ENCODE measurements at regions of chr16 and their contacts with region 1.

Region 1: DNA sequence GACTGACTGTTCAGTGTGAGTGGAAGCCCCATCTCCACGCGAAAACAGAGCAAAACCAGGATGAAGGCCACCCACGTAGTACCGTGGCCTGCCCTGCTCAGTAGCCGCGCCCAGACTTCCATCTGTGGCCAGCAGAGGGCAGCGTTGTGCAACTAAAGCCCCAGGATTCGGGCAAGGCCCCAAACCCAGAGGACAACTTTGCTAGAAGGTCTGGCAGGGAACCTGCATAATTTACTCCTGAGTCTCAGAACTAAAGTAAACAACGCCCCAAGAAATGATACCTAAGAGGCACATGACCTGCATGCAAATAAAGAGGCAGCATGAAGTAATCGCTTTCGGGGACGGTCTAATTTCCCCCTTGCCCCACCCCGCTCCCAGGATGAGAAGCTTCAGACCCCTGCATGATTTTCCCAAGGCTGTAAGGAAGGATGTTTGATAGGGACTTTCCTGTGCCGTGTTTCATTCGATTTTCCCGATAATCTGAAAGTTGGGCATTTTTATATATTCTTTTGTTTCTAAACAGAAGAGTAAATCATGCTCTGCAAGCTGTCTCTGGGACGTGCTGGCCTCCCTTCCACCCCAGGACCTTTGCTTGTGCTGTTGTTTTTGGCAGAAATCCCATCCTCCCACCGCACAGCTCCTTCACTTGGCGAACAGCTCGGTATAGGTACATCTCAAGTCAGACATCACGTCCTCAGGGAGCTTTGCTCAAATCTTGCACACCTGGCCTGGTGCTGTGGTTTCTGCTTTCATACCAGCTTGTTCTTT is 18.6 kb downstream of the HSBP1 start:
- DNase-seq: peak; percentile 85
- H3K4me3 ChIP-seq: no peak overlapping the region
- H3K27ac ChIP-seq: no peak overlapping the region
- H3K4me1 ChIP-seq: peaks cover 5% of the 10 kb centered on the region
- H3K27me3 ChIP-seq: no peaks in the 10 kb centered on the region
- CTCF ChIP-seq: peak; percentile 89 to 90

Region 2: DNA sequence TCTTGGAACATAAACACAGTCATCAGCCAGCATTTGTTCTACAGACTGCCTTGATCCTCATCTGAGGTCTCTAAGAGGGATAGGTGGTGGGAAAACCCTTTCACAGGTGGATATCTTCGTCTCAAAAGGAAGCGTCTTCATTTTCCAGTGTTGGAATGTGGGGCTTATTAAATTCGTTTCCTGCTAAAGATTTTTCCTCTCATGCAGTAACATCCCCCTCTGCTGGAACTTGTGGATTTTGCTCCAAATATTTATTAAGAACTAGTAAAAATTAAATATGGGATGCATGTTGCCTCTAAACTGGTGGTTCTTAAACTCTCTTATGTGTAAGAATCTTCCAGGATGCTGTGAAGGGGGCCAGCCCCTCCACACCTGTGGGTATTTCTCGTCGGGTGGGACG is 52.5 kb after region 1 on chr16:
- CTCF ChIA-PET with region 1: no interaction called
- dilution Hi-C with region 1: no loop called
- in situ Hi-C with region 1: loop called in 1 of 2 experiments (anchors 10 kb)
- intact Hi-C with region 1: loop called (anchors 1 kb)
- DNase-seq: peak; percentile 35
- H3K4me3 ChIP-seq: no peak overlapping the region
- H3K27ac ChIP-seq: no peak overlapping the region
- H3K4me1 ChIP-seq: no peaks in the 10 kb centered on the region
- H3K27me3 ChIP-seq: peaks cover 3% of the 10 kb centered on the region
- CTCF ChIP-seq: peak; percentile 25 to 55

Region 3: GRCh38 chr16:83887081-83887480 is 60.8 kb after region 1 on chr16:
- CTCF ChIA-PET with region 1: no interaction called
- dilution Hi-C with region 1: no loop called
- in situ Hi-C with region 1: loop called in 1 of 2 experiments (anchors 10 kb)
- intact Hi-C with region 1: no loop called
- DNase-seq: peak; percentile 2
- H3K4me3 ChIP-seq: no peak overlapping the region
- H3K27ac ChIP-seq: no peak overlapping the region
- H3K4me1 ChIP-seq: no peaks in the 10 kb centered on the region
- H3K27me3 ChIP-seq: no peaks in the 10 kb centered on the region
- CTCF ChIP-seq: peak; percentile 36 to 39

Region 4: GRCh38 chr16:83926726-83927397 is 100.5 kb after region 1 on chr16:
- CTCF ChIA-PET with region 1: no interaction called
- dilution Hi-C with region 1: no loop called
- in situ Hi-C with region 1: no loop called
- intact Hi-C with region 1: loop called (anchors 1 kb)
- DNase-seq: peak; percentile 81
- H3K4me3 ChIP-seq: peak overlapping the region; percentile 15 to 44 (median 43)
- H3K27ac ChIP-seq: peak overlapping the region; percentile 51
- H3K4me1 ChIP-seq: peaks cover 26% of the 10 kb centered on the region
- H3K27me3 ChIP-seq: no peaks in the 10 kb centered on the region
- CTCF ChIP-seq: peak; percentile 83 to 98

Region 5: GRCh38 chr16:83952940-83953795 is 126.8 kb after region 1 on chr16 and contains the start of gene OSGIN1:
- CTCF ChIA-PET with region 1: no interaction called
- dilution Hi-C with region 1: no loop called
- in situ Hi-C with region 1: no loop called
- intact Hi-C with region 1: loop called (anchors 1 kb)
- DNase-seq: peak; percentile 92
- H3K4me3 ChIP-seq: peak within 1 kb of the TSS; percentile 65 to 76 (median 66)
- H3K27ac ChIP-seq: peak within 1 kb of the TSS; percentile 82
- H3K4me1 ChIP-seq: peaks cover 21% of the 10 kb centered on the region
- H3K27me3 ChIP-seq: no peaks in the 10 kb centered on the region
- CTCF ChIP-seq: no peak
- total RNA-seq, gene OSGIN1: 3.3 to 9.3 TPM

Region 6: DNA sequence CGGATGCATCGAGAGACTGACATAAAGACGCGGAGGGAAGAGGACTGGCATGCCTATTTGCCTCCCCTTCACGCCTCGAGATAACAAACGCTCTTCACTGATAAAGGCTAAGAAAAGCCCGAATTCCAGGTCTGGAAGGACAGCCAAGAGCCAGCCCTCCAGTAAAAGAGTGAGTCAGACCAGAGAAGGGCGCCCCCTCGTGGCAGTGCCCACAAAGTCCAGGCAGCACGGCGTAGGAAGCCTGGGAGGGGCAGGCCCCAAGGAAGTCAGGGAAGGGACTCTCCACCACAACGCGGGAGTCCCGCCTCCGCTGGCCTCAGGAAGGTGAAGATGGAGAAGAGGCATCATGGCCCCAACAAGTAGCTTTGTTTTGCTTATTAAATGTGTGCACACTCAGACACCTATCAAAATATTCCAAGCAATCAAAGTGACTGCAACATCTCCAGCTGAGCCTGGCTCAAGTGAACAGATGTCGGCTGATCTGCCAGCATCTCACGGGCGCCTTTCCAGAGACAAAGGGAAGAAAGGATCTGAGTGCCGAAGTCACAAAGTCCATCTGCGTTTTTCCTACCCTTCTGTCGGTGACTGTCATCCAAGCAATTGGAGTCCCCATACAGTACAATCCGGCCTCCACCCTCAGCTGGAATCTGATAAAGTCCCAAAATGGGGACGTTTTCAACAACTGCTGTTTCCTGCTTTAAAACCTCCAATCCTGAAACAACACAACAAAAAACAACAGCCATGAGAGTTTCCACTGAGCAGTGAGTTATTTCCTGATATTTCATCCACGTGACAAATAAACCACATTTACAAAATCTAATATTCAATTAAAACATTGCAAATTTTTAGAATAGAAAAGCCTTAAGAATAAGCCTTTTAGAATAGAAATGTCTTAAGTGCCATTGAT is 236.7 kb after region 1 on chr16:
- CTCF ChIA-PET with region 1: no interaction called
- dilution Hi-C with region 1: no loop called
- in situ Hi-C with region 1: loop called (anchors 10 to 25 kb)
- intact Hi-C with region 1: loop called (anchors 1 kb)
- DNase-seq: peak; percentile 64
- H3K4me3 ChIP-seq: no peak overlapping the region
- H3K27ac ChIP-seq: no peak overlapping the region
- H3K4me1 ChIP-seq: no peaks in the 10 kb centered on the region
- H3K27me3 ChIP-seq: no peaks in the 10 kb centered on the region
- CTCF ChIP-seq: peak; percentile 88 to 91

Region 7: DNA sequence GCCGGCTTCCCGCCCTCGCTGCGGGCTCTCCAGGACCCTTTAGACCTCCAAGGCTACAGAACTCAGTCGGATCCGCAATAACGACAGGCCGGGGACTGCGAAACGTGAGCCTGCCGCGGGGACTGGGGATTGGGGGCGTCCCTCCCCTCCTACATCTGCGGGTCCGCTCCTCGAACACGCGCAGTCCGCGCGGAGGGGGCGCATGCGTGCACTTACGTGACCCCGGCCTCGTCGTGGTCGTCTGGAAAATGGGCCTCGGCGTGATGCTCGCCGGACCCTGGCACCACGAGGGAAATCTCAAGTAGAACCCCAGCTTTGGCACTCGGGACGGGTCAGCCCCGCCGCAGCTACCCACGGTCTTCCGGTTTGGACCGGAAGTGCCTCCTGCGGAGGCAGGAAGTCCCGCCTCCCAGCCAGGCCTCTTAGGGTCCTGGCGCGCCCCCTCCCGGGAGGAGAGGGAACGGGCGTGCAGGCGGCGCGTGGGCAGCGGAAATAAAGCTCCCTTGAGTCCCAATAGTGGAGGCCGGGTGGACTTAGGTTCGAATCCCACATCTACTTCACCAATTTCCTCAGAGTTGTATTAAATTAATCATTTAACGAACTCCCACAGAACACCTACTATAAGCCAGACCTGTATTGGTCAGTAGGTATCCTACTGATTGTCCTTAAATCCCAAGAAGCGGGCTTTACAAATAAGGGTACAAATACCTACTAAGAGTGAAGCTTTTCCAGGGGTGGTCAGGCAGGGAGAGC is 360.5 kb after region 1 on chr16 and contains the start of gene TAF1C:
- CTCF ChIA-PET with region 1: no interaction called
- dilution Hi-C with region 1: no loop called
- in situ Hi-C with region 1: no loop called
- intact Hi-C with region 1: loop called (anchors 2 kb)
- DNase-seq: peak; percentile 87
- H3K4me3 ChIP-seq: peak within 1 kb of the TSS; percentile 92 to 97 (median 97)
- H3K27ac ChIP-seq: peak within 1 kb of the TSS; percentile 51
- H3K4me1 ChIP-seq: peaks cover 3% of the 10 kb centered on the region
- H3K27me3 ChIP-seq: no peaks in the 10 kb centered on the region
- CTCF ChIP-seq: peak; percentile 81 to 98
- total RNA-seq, gene TAF1C: 15.3 to 30.1 TPM